Posterior cingulate gyrus (tissue), 11 donors: ENCODE measurements at regions of chr17 and their contacts with region 1.

Region 1: DNA sequence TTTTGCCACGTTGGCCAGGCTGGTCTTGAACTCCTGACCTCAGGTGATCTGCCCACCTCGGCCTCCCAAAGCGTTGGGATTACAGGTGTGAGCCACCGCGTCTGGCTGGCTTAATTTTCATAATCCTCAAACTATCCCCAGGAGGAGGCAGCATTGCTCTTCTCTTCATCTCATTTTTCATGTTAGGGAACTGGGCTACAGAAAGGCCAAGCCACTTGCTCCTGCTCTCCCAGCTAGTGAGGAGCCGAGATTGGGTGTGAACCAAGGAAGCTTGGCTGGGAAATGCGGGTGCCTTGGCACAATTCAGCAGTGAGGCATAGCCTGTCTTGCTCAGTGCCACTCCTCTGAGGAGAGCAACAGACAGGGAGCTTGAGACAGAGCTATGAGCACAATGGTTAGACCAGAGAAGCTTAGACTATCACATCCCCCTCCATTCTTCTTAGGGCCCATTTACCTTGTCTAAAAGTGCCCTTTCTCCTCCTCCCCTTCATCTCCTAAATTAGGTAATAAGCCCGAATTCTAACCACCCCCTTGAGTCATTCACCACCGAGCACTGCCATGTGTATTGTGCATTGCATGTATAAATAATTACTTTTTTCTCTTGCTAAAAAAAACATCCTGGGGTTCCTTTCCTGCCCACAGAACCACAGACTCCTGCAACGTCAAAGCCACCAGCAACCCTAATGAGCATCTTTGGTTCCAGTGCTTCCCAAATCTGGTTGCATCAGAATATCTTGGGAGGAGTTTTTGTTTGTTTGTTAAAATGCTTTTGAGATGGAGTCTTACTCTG is 20.0 kb upstream of the KIF19 start:
- DNase-seq: peak in 1 of 10 donors; percentile 44

Region 2: GRCh38 chr17:74340470-74341023 is 34.5 kb after region 1 on chr17:
- intact Hi-C with region 1: no loop called
- DNase-seq: peak in 7 of 10 donors; percentile 44 to 95 (median 69)

Region 3: DNA sequence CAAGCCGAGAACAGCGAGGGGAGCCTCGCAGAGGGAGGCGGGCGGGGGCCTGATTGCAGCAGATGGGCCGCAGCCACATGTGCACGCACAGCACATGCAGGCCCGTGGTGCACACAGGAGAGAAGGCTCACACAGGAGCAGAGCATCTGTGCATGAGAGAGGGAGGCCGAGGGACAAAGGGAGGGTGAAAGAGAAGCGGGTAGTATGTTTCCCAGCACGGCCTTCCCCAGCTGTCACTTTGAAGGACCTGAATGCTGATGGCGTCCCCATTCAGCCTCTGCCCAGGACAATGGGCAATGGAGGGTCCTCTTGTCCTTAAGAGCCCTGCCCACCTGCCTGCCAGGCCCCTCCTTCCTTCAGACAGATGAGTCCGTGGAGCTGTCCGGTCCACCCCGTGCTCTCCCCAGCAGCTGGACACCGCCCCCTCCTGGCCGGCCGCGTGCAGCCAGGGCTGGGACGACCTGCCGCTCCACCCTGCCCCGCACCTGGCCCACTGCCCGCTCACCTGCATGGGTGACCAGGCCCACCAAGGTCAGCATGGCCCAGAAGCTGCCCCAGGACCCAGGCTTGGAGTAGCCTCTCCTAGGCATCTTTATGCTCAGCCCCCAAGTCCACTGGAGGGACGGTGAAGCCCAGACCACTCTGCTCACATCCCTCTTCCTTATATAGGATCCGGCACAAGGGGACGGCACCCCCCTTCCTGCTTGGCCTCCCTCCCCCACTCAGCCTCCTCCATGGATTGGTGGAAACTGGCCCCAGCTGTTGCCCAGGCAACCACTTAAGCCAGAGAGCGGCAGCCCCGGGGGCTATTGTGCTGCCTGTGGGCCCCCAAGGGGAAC is 55.4 kb after region 1 on chr17 and contains the start of gene BTBD17:
- intact Hi-C with region 1: loop called (anchors 2 kb)
- DNase-seq: peak; percentile 47 to 96 (median 76)

Region 4: GRCh38 chr17:74457146-74457819 is 151.2 kb after region 1 on chr17:
- intact Hi-C with region 1: loop called (anchors 2 kb)
- DNase-seq: peak; percentile 52 to 97 (median 84)

Region 5: DNA sequence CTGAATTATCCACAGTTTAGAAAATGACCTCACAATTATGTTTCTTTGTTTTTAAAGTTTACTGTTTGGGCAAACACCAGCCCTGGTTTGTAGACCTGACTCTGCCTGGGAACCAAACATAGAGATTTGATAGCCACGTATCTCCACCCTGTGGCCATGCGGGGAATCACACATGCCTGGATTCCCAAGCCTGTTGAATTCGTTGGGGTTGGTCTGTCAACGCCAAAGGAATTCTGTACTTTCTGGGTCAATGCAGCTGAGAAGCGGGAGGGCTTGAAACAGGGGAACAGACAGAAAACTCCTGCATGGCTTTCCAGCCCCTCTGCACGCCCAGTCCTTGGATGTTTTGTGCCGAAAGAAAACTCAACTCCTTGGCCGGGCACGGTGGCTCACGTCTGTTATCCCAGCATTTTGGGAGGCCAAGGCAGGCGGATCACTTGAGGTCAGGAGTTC is 187.3 kb after region 1 on chr17:
- intact Hi-C with region 1: loop called (anchors 10 kb)
- DNase-seq: peak; percentile 50 to 94 (median 76)